Head of caudate nucleus (tissue), 42 donors: ENCODE measurements at regions of chr17 and their contacts with region 1.

Region 1: GRCh38 chr17:66661381-66661843 is 173.5 kb upstream of the CACNG5 start:
- DNase-seq: no peak

Region 2: GRCh38 chr17:66578781-66579489 is 82.5 kb before region 1 on chr17:
- intact Hi-C with region 1: loop called (anchors 10 kb)
- DNase-seq: peak in 2 of 42 donors; percentile 14 to 21

Region 3: GRCh38 chr17:66702106-66702872 is 40.9 kb after region 1 on chr17:
- intact Hi-C with region 1: no loop called
- DNase-seq: no peak